ENCODE measurements at regions of chr4 and their contacts with region 1.

Region 1: GRCh38 chr4:99043346-99043745 is 45.2 kb downstream of the ADH5 start:
- DNase-seq: no peak
- H3K4me3 Mint-ChIP-seq: no peak overlapping the region
- H3K27ac Mint-ChIP-seq: peak overlapping the region; percentile 74
- H3K4me1 Mint-ChIP-seq: peaks cover 20% of the 10 kb centered on the region
- H3K27me3 Mint-ChIP-seq: no peaks in the 10 kb centered on the region

Region 2: GRCh38 chr4:98828801-98829200 is 214.5 kb before region 1 on chr4:
- CTCF ChIA-PET with region 1: no interaction called
- POLR2A ChIA-PET with region 1: no interaction called
- DNase-seq: peak; percentile 23
- H3K4me3 Mint-ChIP-seq: no peak overlapping the region
- H3K27ac Mint-ChIP-seq: no peak overlapping the region
- H3K4me1 Mint-ChIP-seq: no peaks in the 10 kb centered on the region
- H3K27me3 Mint-ChIP-seq: peaks cover 9% of the 10 kb centered on the region

Region 3: GRCh38 chr4:99088481-99089365 is 45.4 kb after region 1 on chr4 and contains the start of gene ADH5:
- CTCF ChIA-PET with region 1: interaction called, 3 read pairs
- POLR2A ChIA-PET with region 1: interaction called, 14 read pairs
- DNase-seq: peak; percentile 92
- H3K4me3 Mint-ChIP-seq: peak within 1 kb of the TSS; percentile 93
- H3K27ac Mint-ChIP-seq: peak within 1 kb of the TSS; percentile 97
- H3K4me1 Mint-ChIP-seq: peaks cover 45% of the 10 kb centered on the region
- H3K27me3 Mint-ChIP-seq: no peaks in the 10 kb centered on the region
- total RNA-seq, gene ADH5: 107 to 114 TPM